ENCODE measurements at regions of chr1 and their contacts with region 1.

Region 1: GRCh38 chr1:32992489-32993323 is 28.1 kb upstream of the RNF19B start:
- DNase-seq: peak; percentile 78
- CTCF ChIP-seq: no peak

Region 2: GRCh38 chr1:32964461-32965250 is 28.1 kb before region 1 on chr1 and contains the start of gene RNF19B:
- CTCF ChIA-PET with region 1: interaction called, 6 read pairs
- POLR2A ChIA-PET with region 1: interaction called, 22 read pairs
- DNase-seq: peak; percentile 97
- CTCF ChIP-seq: no peak

Region 3: GRCh38 chr1:32981003-32981901 is 11.5 kb before region 1 on chr1:
- CTCF ChIA-PET with region 1: interaction called, 10 read pairs
- POLR2A ChIA-PET with region 1: interaction called, 11 read pairs
- DNase-seq: peak; percentile 85
- CTCF ChIP-seq: no peak

Region 4: DNA sequence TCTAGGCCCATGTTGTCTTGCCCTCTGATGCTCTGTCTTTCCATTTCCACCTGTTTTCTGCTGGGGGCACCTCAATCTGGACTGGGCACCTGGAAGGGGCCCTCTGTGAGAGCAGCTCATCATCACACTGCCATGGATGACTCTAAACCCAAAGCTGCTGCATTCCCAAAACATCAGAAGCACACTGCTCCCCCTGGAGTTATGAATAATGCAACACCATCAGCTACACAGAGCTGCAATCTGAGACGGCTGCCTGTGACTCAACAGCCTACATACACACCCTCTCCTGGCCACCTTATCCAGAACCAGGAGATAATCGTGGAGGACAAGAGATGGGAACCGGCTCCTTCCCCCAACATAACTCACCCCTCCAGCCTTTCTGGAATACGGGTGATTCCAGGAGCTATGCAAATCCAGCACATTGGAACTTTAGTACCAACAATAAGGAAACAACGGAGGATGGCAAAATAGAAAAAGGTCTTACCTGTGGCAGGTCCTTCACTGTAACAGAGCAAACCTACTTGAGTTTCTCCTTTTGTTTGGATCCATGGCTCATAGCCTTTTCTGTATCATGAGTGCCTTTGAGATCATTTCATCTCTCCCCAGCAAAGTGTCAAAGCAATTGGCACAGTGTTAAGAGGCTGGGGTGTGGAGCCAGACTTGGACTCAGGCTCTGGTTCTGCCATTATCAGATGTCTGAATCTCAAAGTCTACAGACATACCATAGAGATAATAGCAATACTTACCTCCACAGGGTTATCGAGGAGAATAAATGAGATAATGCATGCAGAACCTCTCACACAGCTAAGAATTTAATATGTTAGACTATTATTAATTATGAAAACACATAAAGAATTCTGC is 14.7 kb after region 1 on chr1:
- CTCF ChIA-PET with region 1: interaction called, 62 read pairs
- POLR2A ChIA-PET with region 1: interaction called, 4 read pairs
- DNase-seq: no peak
- CTCF ChIP-seq: no peak

Measured in GM10248 (cell line).